MCF 10A (cell line): ENCODE measurements at regions of chr1 and their contacts with region 1.

Region 1: GRCh38 chr1:222739465-222739864 is 2.5 kb downstream of the FAM177B start:
- DNase-seq: no peak
- H3K4me3 Mint-ChIP-seq: no peak overlapping the region
- H3K27ac Mint-ChIP-seq: no peak overlapping the region
- H3K4me1 Mint-ChIP-seq: no peaks in the 10 kb centered on the region
- H3K27me3 Mint-ChIP-seq: no peaks in the 10 kb centered on the region
- CTCF ChIP-seq: no peak

Region 2: GRCh38 chr1:222570837-222571236 is 168.6 kb before region 1 on chr1:
- CTCF ChIA-PET with region 1: no interaction called
- POLR2A ChIA-PET with region 1: no interaction called
- intact Hi-C with region 1: no loop called
- DNase-seq: no peak
- H3K4me3 Mint-ChIP-seq: no peak overlapping the region
- H3K27ac Mint-ChIP-seq: no peak overlapping the region
- H3K4me1 Mint-ChIP-seq: no peaks in the 10 kb centered on the region
- H3K27me3 Mint-ChIP-seq: no peaks in the 10 kb centered on the region
- CTCF ChIP-seq: no peak

Region 3: DNA sequence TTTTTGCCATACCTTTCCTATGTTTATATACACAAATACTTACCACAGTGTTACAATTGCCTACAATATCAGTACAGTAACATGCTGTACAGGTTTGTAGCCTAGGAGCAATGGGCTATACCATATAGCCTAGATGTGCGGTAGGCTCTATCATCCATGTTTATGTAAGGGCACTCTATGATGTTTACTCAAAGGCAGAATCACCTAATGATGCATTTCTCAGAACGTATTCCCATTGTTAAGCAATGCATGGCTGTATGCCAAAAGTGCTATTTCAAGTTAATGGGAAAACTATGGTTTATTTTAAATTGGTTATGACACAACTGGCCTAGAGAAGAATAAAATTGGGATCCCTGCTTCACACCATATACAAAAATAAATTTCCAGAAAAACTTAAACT is 38.5 kb after region 1 on chr1:
- CTCF ChIA-PET with region 1: interaction called, 13 read pairs
- POLR2A ChIA-PET with region 1: interaction called, 5 read pairs
- intact Hi-C with region 1: no loop called
- DNase-seq: peak; percentile 100
- H3K4me3 Mint-ChIP-seq: peak overlapping the region; percentile 28
- H3K27ac Mint-ChIP-seq: peak overlapping the region; percentile 77
- H3K4me1 Mint-ChIP-seq: peaks cover 21% of the 10 kb centered on the region
- H3K27me3 Mint-ChIP-seq: peaks cover 14% of the 10 kb centered on the region
- CTCF ChIP-seq: no peak

Region 4: GRCh38 chr1:222798116-222798515 is 58.7 kb after region 1 on chr1:
- CTCF ChIA-PET with region 1: interaction called, 20 read pairs
- POLR2A ChIA-PET with region 1: interaction called, 4 read pairs
- intact Hi-C with region 1: no loop called
- DNase-seq: peak; percentile 58
- H3K4me3 Mint-ChIP-seq: no peak overlapping the region
- H3K27ac Mint-ChIP-seq: no peak overlapping the region
- H3K4me1 Mint-ChIP-seq: no peaks in the 10 kb centered on the region
- H3K27me3 Mint-ChIP-seq: peaks cover 8% of the 10 kb centered on the region
- CTCF ChIP-seq: no peak